Ascending aorta (tissue), 2 donors: ENCODE measurements at regions of chr5 and their contacts with region 1.

Region 1: GRCh38 chr5:68776381-68776780 is 317.4 kb upstream of the SLC30A5 start:
- DNase-seq: no peak
- H3K4me3 ChIP-seq: no peak overlapping the region
- H3K27ac ChIP-seq: no peak overlapping the region
- H3K4me1 ChIP-seq: no peaks in the 10 kb centered on the region
- H3K27me3 ChIP-seq: no peaks in the 10 kb centered on the region
- CTCF ChIP-seq: no peak

Region 2: GRCh38 chr5:68178579-68178978 is 597.8 kb before region 1 on chr5:
- intact Hi-C with region 1: no loop called
- DNase-seq: no peak
- H3K4me3 ChIP-seq: no peak overlapping the region
- H3K27ac ChIP-seq: no peak overlapping the region
- H3K4me1 ChIP-seq: no peaks in the 10 kb centered on the region
- H3K27me3 ChIP-seq: no peaks in the 10 kb centered on the region
- CTCF ChIP-seq: no peak

Region 3: DNA sequence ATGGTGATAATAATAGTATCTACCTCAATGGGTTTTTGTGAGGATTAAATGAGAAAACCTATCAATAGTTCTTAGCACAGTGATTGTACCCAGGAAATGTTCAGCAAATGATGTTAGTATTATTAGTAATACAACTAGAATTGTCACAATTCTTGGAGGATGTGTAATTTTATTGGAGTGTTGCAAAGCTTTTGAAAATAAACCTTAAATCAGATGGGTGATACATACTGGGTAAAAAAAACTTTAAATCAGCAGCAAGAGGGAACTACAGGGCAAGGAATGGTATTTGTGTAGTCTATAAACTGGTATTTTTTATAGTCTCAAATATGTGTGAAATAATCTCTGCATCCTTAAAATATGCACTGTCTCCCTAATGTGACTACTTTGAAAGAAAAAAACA is 189.2 kb before region 1 on chr5:
- intact Hi-C with region 1: no loop called
- DNase-seq: no peak
- H3K4me3 ChIP-seq: no peak overlapping the region
- H3K27ac ChIP-seq: no peak overlapping the region
- H3K4me1 ChIP-seq: no peaks in the 10 kb centered on the region
- H3K27me3 ChIP-seq: no peaks in the 10 kb centered on the region
- CTCF ChIP-seq: no peak

Region 4: GRCh38 chr5:68798877-68799843 is 22.8 kb after region 1 on chr5:
- intact Hi-C with region 1: loop called (anchors 1 kb)
- DNase-seq: no peak
- H3K4me3 ChIP-seq: no peak overlapping the region
- H3K27ac ChIP-seq: no peak overlapping the region
- H3K4me1 ChIP-seq: peaks cover 0 to 6% of the 10 kb centered on the region in 2 donors
- H3K27me3 ChIP-seq: no peaks in the 10 kb centered on the region
- CTCF ChIP-seq: no peak